ENCODE measurements at regions of chr15 and their contacts with region 1.

Region 1: DNA sequence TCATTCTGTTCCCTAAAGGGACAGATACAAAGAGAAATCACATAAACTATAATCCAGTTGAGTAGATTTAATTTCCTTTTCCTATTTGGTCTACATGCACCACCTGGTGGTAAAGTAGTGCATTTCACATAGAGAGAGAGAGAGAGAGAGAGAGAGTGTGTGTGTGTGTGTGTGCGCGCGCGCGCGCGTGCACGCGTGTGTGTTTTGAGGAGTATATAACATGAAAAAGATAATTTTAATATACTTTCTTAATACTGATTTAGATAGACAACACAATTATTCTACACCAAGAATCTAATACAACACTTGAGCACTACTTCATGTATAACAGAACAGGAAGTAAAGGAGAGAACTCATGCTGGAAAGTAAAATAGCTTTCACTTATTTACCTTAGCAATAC is 1.1 kb upstream of the FGF7 start:
- DNase-seq: peak; percentile 55
- H3K4me3 ChIP-seq: peak overlapping the region in 1 of 3 experiments; percentile 33
- H3K27ac ChIP-seq: no peak overlapping the region
- H3K4me1 ChIP-seq: no peaks in the 10 kb centered on the region
- H3K27me3 ChIP-seq: peaks cover 3% of the 10 kb centered on the region
- CTCF ChIP-seq: peak; percentile 75 to 85

Region 2: DNA sequence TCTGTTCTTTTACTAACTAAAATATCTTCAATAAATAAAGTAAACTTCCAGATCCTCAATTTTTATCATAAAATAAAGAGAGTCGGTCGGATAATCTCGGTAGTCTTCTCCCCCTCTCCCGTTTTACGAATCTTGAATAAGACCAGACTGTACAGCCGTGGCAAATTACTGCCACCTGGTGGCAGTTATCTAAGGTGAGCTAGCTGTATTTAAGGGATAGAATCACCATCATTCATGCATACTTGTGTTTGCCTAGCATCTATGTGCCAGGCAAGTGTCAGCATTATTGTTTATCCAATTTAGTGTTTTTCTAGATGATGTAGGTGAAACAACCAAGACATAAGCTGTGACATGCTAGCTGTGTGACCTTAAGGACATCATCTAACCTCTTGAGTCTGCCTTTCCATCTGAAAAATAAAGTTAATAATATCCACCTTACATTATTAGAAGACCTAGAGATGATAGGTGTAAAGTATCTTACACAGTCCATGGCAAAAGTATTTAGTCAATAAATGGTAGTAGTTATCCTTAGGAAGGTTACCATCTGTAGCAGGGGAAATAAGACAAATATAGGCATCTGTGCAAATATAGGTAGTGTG is 1069.4 kb before region 1 on chr15:
- CTCF ChIA-PET with region 1: no interaction called
- dilution Hi-C with region 1: no loop called
- in situ Hi-C with region 1: no loop called
- intact Hi-C with region 1: loop called (anchors 10 kb)
- DNase-seq: peak; percentile 47
- H3K4me3 ChIP-seq: no peak overlapping the region
- H3K27ac ChIP-seq: no peak overlapping the region
- H3K4me1 ChIP-seq: no peaks in the 10 kb centered on the region
- H3K27me3 ChIP-seq: no peaks in the 10 kb centered on the region
- CTCF ChIP-seq: peak; percentile 78 to 84

Region 3: GRCh38 chr15:49301562-49301961 is 120.4 kb before region 1 on chr15:
- CTCF ChIA-PET with region 1: no interaction called
- dilution Hi-C with region 1: no loop called
- in situ Hi-C with region 1: no loop called
- intact Hi-C with region 1: no loop called
- DNase-seq: peak; percentile 5
- H3K4me3 ChIP-seq: no peak overlapping the region
- H3K27ac ChIP-seq: no peak overlapping the region
- H3K4me1 ChIP-seq: no peaks in the 10 kb centered on the region
- H3K27me3 ChIP-seq: no peaks in the 10 kb centered on the region
- CTCF ChIP-seq: no peak

Region 4: GRCh38 chr15:49370782-49371181 is 51.2 kb before region 1 on chr15:
- CTCF ChIA-PET with region 1: no interaction called
- dilution Hi-C with region 1: no loop called
- in situ Hi-C with region 1: no loop called
- intact Hi-C with region 1: loop called (anchors 1 kb)
- DNase-seq: no peak
- H3K4me3 ChIP-seq: no peak overlapping the region
- H3K27ac ChIP-seq: no peak overlapping the region
- H3K4me1 ChIP-seq: no peaks in the 10 kb centered on the region
- H3K27me3 ChIP-seq: no peaks in the 10 kb centered on the region
- CTCF ChIP-seq: peak in 1 of 2 donors; percentile 49

Measured in mammary epithelial cell (primary cell).